Activated CD4-positive, alpha-beta T cell treated with anti-CD3 and anti-CD28 coated beads, Interleukin-2, amount 10 ng/mL, durations not matched to agents 24 days and 14 days (primary cell): ENCODE measurements at regions of chr15 and their contacts with region 1.

Region 1: DNA sequence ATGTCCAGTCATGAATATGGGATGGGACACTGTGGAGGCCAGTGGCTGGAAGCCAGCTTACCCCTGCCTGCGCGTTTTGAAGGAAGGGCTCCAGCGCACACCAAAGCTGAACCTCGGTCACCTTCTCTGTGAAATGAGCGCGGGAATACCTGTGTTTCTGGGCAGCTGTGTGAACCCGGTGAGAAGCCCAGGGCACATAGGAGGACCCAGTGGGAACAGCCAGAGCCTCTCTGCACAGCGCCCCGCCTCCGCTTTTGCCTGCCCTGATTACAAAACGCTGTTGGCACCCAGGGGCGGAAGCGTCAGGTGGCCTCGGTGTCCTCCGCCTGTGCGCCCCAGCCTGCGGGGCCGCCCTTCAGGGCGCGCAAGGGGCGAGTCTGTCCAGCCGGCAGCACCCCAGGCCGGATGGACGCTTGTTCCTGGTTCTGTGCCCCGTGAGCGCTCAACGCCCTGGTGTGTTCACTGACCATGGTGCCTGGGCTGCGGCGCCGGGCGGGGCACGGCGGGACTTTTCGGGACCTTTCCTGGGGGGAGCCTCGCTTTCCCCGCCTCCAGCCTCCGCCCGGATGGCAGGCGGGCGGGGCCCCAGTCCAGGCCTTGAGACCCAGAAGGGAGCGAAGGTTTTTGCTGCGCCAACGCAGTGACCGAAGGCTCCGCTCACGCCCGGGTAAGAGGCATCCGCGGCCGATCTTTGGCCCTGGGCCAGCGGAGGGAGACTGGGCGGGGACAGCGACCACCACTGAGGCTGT is at the start of gene SQOR:
- DNase-seq: peak; percentile 92
- H3K4me3 Mint-ChIP-seq: peak within 1 kb of the TSS; percentile 100
- H3K27ac Mint-ChIP-seq: peak within 1 kb of the TSS; percentile 98
- H3K4me1 Mint-ChIP-seq: peaks cover 38% of the 10 kb centered on the region
- H3K27me3 Mint-ChIP-seq: peaks cover 2% of the 10 kb centered on the region
- total RNA-seq, gene SQOR: 103 and 108 TPM in 2 replicates

Region 2: GRCh38 chr15:45587095-45587860 is 47.3 kb before region 1 on chr15 and contains the start of gene BLOC1S6:
- intact Hi-C with region 1: loop called (anchors 1 kb)
- DNase-seq: peak; percentile 96
- H3K4me3 Mint-ChIP-seq: peak within 1 kb of the TSS; percentile 99
- H3K27ac Mint-ChIP-seq: peak within 1 kb of the TSS; percentile 100
- H3K4me1 Mint-ChIP-seq: peaks cover 31% of the 10 kb centered on the region
- H3K27me3 Mint-ChIP-seq: no peaks in the 10 kb centered on the region
- total RNA-seq, gene BLOC1S6: 42.8 and 44.8 TPM in 2 replicates

Region 3: DNA sequence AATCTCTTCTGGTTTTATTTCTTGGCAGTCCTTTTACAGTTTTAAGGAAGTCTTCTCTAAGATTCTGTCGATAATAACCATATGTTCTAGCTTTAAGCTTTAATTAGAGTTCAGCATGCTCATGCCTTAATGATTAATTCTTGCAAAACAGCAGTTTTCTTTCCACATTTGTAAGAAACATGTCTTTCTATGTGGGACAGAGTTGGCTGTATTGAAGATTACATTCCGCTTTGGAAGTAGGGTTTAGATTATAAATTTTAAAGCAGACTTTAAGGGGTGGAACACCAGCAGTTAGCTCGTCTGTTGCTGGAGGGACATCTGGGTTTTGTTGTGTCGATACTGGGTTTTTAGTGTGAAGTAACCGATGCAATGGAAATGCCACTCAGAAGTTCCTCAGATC is 35.5 kb after region 1 on chr15:
- intact Hi-C with region 1: no loop called
- DNase-seq: no peak
- H3K4me3 Mint-ChIP-seq: no peak overlapping the region
- H3K27ac Mint-ChIP-seq: no peak overlapping the region
- H3K4me1 Mint-ChIP-seq: peaks cover 4% of the 10 kb centered on the region
- H3K27me3 Mint-ChIP-seq: no peaks in the 10 kb centered on the region